CD14-positive monocyte (primary cell): ENCODE measurements at regions of chr12 and their contacts with region 1.

Region 1: DNA sequence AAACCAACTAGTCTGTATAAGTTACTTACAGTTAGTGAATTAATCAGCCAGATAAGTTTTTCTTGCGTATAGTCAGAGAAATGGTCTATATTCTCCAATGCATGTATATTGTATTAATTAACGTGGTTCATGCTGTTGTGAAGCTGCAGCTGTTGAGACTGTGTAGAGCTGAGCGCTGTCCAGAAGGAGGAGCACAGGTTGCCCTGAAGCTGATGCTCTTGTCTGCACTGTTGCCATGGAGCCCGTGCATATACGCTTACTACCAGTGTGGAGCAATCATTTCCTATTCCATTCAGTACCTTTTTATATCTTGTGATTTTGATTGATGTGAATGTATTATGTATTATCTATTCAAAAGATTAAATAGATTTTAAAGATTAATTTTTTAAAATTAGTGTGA is 74.3 kb upstream of the ARID2 start:
- DNase-seq: peak in 1 of 3 donors; percentile 9
- H3K4me3 ChIP-seq: no peak overlapping the region
- H3K4me3 Mint-ChIP-seq: no peak overlapping the region
- H3K27ac ChIP-seq: no peak overlapping the region
- H3K27ac Mint-ChIP-seq: no peak overlapping the region
- H3K4me1 ChIP-seq: peaks cover 23 to 31% of the 10 kb centered on the region in 2 donors
- H3K4me1 Mint-ChIP-seq: peaks cover 29% of the 10 kb centered on the region
- H3K27me3 ChIP-seq: no peaks in the 10 kb centered on the region
- H3K27me3 Mint-ChIP-seq: peaks cover 0 to 2% (median 0%) of the 10 kb centered on the region in 3 donors
- CTCF ChIP-seq: no peak

Region 2: DNA sequence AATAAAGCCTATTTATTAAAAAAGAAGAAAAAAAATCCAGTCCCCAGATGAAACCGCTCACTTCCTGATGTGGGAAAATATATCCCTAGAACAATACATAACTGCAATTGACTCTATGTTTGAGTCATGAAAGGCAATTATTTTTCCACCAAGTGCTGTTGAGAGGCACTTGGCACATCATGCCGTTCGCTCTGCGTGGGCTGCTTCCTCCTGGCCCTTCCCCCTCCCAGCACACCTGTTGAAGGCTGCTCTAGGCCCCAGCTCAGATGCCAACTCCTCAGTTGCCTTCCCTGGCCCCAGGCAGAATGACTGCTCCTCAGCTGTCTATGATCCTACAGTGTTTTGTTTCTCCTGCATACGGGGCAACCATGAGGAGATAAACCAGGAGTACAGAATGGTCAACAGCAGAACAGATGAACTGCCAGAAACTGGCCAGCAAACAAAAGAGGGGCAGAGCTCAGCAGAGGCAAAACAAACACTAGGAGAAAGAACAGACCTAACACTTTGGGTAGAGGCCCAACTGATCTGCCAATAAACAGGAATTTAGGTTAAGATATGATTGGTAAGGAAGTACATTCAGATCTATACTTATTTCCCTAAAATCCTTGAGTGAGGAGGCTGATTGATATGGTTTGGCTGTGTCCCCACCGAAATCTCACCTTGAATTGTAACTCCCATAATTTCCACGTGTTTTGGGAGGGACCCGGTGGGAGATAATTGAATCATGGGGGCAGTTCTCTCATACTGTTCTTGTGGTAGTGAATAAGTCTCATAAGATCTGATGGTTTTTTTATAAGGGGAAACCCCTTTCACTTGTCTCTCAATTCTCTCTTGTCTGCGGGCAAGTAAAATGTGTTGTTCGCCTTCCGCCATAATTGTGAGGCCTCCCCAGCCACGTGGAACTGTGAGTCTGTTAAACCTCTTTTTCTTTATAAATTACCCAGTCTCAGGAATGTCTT is 555.0 kb after region 1 on chr12:
- intact Hi-C with region 1: loop called in 1 of 2 experiments (anchors 10 kb)
- DNase-seq: no peak
- H3K4me3 ChIP-seq: no peak overlapping the region
- H3K4me3 Mint-ChIP-seq: no peak overlapping the region
- H3K27ac ChIP-seq: no peak overlapping the region
- H3K27ac Mint-ChIP-seq: peak overlapping the region in 1 of 7 donors; percentile 11
- H3K4me1 ChIP-seq: peaks cover 7% of the 10 kb centered on the region in 2 donors
- H3K4me1 Mint-ChIP-seq: peaks cover 21% of the 10 kb centered on the region
- H3K27me3 ChIP-seq: no peaks in the 10 kb centered on the region
- H3K27me3 Mint-ChIP-seq: peaks cover 3 to 12% (median 6%) of the 10 kb centered on the region in 3 donors
- CTCF ChIP-seq: no peak

Region 3: DNA sequence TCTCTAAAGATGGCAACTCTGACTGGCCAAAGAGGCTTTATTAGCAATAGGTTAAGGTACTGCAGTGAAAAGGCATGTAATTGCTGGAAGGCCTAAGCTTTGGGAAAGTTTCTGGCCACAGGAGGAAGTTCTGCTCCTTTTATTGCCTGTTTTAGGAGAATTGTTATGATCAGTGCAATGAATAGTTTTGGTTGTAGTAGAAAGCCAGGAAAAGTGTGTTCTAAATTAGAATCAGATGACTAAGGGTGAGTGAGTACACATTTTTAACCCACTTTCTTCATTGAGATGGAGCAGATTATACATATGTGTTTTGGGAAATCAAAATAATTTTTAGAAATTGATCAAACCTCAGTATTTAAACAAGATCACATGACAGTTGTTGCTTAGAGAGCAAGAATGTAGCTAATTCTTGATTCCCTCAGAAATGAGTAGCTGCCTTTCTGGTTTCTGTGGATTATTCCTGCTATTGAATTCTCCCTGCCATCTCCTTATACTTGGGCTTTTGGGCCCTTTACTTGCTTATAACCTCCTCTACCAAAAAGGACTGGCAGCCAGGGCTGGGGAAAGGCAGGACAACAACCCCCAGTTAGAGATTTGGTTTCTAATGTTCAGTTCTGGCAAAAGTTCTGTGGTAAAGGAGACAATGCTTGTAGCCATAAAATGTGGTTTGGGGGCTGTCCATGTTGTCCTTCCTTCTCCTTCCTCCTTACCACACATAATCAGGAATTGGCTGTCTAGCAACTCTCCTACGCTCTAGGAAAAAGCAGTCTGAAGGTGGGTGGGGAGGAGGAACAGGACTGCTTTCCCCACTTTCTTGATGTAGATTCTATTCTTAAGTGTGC is 953.5 kb after region 1 on chr12:
- intact Hi-C with region 1: no loop called
- DNase-seq: no peak
- H3K4me3 ChIP-seq: no peak overlapping the region
- H3K4me3 Mint-ChIP-seq: no peak overlapping the region
- H3K27ac ChIP-seq: no peak overlapping the region
- H3K27ac Mint-ChIP-seq: no peak overlapping the region
- H3K4me1 ChIP-seq: no peaks in the 10 kb centered on the region
- H3K4me1 Mint-ChIP-seq: peaks cover 2% of the 10 kb centered on the region
- H3K27me3 ChIP-seq: no peaks in the 10 kb centered on the region
- H3K27me3 Mint-ChIP-seq: no peaks in the 10 kb centered on the region
- CTCF ChIP-seq: no peak